CD4-positive, alpha-beta T cell (primary cell): ENCODE measurements at regions of chr22 and their contacts with region 1.

Region 1: DNA sequence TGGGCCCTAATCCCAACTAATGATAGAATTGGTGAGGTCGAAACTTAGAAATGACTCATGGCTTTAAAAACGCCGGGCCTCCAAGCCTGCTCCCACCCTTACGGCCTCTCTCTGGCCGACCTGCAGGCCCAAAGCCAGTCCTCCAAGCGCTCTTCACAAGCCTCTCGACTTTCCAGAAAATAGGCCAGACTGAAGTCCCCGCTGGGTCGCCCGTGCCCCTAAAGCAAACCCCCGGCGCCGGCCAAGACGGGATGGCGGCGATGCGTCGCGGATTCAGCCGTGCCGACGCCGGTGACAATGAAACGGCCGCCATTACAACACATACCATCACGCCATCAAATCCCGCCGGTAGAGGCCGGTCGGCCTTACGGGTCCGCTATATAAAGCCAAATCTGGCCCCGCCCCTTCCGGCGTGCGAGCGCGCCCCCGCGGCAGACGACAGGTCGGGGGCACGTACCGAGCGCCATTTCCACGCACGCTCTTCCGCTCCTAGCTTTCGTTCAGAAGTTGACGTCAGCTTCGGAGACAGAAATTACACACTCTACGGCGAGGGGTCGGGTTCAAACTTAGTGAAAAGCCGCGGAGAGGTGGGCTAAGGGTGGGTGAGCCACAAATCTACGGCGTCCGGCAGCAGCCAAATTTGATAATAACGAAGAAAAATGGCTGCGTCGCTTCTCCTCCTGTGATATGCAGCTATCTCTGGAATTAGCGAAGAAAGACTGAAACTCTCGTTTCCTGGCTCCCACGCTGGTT is at the start of gene RPL3:
- DNase-seq: peak; percentile 96 to 99 (median 98)
- ATAC-seq: peak; percentile 76
- H3K4me3 ChIP-seq: peak within 1 kb of the TSS; percentile 90
- H3K4me3 Mint-ChIP-seq: peak within 1 kb of the TSS; percentile 99
- H3K27ac ChIP-seq: peak within 1 kb of the TSS; percentile 88 to 92
- H3K27ac Mint-ChIP-seq: peak within 1 kb of the TSS; percentile 96
- H3K4me1 ChIP-seq: peaks cover 57% of the 10 kb centered on the region
- H3K4me1 Mint-ChIP-seq: peaks cover 41% of the 10 kb centered on the region
- H3K27me3 ChIP-seq: no peaks in the 10 kb centered on the region
- H3K27me3 Mint-ChIP-seq: no peaks in the 10 kb centered on the region
- CTCF ChIP-seq: no peak
- total RNA-seq, gene RPL3: 3,952 to 3,974 TPM

Region 2: DNA sequence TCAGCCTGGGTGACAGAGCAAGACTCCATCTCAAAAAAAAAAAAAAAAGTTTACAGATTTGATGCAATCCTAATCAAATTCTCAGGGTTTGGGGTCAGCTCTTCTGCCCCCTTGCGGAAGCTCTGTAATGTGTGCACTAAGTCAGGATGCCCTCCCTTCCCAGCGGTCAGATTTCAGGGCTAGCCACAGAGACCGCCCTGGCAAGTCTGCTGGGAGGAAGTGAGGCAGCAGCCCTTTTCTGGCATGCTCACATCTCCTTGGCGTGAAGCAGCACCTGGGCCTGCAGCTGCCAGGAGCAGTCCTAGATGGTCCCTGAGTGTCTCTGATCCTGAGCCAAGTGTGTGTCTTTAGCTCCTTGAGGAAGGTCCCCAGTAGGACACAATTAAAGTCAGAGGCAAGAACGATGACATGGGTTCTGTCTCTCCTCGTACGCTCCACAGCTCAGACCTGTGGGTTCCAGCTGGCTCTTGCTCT is 316.2 kb before region 1 on chr22:
- CTCF ChIA-PET with region 1: interaction called, 4 read pairs
- POLR2A ChIA-PET with region 1: interaction called, 4 read pairs
- intact Hi-C with region 1: loop called in 1 of 2 experiments (anchors 5 kb)
- DNase-seq: peak; percentile 51 to 91 (median 64)
- ATAC-seq: peak; percentile 83
- H3K4me3 ChIP-seq: no peak overlapping the region
- H3K4me3 Mint-ChIP-seq: no peak overlapping the region
- H3K27ac ChIP-seq: no peak overlapping the region
- H3K27ac Mint-ChIP-seq: no peak overlapping the region
- H3K4me1 ChIP-seq: peaks cover 16% of the 10 kb centered on the region
- H3K4me1 Mint-ChIP-seq: peaks cover 9% of the 10 kb centered on the region
- H3K27me3 ChIP-seq: no peaks in the 10 kb centered on the region
- H3K27me3 Mint-ChIP-seq: no peaks in the 10 kb centered on the region
- CTCF ChIP-seq: peak; percentile 80

Region 3: DNA sequence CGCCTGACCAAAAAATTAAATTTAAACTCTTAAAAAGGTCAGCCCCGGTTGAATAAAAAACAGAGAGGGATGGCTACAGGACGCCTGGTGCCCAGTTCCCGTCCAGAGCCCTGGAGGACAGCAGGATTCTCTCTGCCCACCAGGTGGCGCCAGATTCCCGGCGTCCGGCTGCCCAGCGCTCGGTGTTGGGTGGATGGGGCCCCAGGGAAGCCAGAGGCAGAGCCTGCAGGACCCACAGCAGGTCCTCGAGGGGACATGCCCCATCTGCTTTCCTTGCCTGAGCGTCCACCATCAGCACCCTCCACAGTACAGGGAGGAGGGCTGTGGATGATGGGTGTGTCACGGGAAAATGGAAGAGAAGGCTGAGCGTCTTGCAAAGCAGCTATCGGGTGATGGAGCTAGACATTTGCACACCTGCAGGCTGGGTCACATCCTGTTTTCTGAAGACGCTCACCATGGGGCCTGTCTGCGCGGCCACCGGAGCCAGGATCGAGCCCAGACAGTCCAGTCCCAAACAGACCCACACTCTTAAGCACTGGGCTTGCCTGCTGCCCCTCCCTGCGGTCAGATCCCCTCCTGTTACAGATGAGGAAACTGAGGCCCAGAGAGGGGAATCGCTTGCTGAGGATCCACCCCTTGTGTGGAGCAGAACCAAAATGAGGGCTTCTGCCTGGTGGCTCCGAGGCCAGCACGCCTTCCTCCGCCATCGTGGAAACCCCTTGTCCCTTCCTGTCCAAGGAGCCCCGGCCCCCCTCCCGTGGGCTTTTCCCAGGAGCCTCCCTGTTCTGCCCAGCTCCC is 148.4 kb before region 1 on chr22:
- CTCF ChIA-PET with region 1: interaction called, 43 read pairs
- POLR2A ChIA-PET with region 1: interaction called, 163 read pairs
- intact Hi-C with region 1: loop called in 1 of 2 experiments (anchors 1 kb)
- DNase-seq: peak; percentile 63 to 90 (median 84)
- ATAC-seq: peak; percentile 74
- H3K4me3 ChIP-seq: peak overlapping the region; percentile 41
- H3K4me3 Mint-ChIP-seq: peak overlapping the region; percentile 69
- H3K27ac ChIP-seq: peak overlapping the region in 1 of 2 donors; percentile 58
- H3K27ac Mint-ChIP-seq: peak overlapping the region; percentile 97
- H3K4me1 ChIP-seq: peaks cover 58% of the 10 kb centered on the region
- H3K4me1 Mint-ChIP-seq: peaks cover 47% of the 10 kb centered on the region
- H3K27me3 ChIP-seq: no peaks in the 10 kb centered on the region
- H3K27me3 Mint-ChIP-seq: no peaks in the 10 kb centered on the region
- CTCF ChIP-seq: peak; percentile 99

Region 4: DNA sequence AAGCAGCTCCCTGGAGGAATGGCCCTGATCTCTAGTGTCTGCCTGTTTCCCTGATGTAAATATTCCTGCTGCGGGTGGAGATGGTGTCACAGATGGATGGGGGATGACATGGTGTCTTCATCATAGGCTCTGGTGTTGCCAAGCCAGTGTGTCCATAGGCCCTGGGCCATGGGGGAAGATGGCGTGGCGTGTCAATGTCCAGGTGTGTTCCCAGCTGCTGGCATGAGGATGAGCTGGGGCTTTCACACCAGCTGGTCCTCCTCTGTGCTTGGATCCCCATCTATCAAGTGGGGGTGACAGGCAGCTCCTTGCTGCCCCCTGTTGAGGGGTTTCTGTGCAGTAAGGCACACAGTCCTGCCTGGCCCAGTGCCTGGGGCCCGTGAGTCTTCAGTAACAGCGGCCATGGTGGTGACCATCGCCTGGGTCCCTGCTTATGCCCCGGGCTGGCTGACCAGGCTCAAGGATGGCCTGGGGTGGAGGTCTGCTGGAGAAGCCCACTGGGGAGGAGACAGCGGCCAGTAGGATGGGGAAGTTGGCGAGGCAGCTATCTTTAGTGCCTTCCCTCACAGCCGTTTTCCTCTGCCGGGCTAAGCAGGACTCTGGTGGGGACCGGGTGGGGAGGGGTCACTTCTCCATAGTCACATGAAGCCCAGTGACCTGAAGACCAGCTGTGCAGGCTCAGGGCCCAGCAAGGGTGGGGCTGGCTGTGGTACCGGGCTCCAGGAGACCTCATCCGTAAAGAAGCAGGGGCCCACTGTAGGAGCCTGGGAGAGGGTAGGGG is 12.7 kb before region 1 on chr22:
- CTCF ChIA-PET with region 1: interaction called, 11 read pairs
- POLR2A ChIA-PET with region 1: interaction called, 21 read pairs
- intact Hi-C with region 1: no loop called
- DNase-seq: peak in 13 of 14 experiments; percentile 29 to 77 (median 58)
- ATAC-seq: peak; percentile 50
- H3K4me3 ChIP-seq: no peak overlapping the region
- H3K4me3 Mint-ChIP-seq: no peak overlapping the region
- H3K27ac ChIP-seq: no peak overlapping the region
- H3K27ac Mint-ChIP-seq: no peak overlapping the region
- H3K4me1 ChIP-seq: peaks cover 27% of the 10 kb centered on the region
- H3K4me1 Mint-ChIP-seq: peaks cover 9% of the 10 kb centered on the region
- H3K27me3 ChIP-seq: no peaks in the 10 kb centered on the region
- H3K27me3 Mint-ChIP-seq: peaks cover 4% of the 10 kb centered on the region
- CTCF ChIP-seq: peak; percentile 56

Region 5: DNA sequence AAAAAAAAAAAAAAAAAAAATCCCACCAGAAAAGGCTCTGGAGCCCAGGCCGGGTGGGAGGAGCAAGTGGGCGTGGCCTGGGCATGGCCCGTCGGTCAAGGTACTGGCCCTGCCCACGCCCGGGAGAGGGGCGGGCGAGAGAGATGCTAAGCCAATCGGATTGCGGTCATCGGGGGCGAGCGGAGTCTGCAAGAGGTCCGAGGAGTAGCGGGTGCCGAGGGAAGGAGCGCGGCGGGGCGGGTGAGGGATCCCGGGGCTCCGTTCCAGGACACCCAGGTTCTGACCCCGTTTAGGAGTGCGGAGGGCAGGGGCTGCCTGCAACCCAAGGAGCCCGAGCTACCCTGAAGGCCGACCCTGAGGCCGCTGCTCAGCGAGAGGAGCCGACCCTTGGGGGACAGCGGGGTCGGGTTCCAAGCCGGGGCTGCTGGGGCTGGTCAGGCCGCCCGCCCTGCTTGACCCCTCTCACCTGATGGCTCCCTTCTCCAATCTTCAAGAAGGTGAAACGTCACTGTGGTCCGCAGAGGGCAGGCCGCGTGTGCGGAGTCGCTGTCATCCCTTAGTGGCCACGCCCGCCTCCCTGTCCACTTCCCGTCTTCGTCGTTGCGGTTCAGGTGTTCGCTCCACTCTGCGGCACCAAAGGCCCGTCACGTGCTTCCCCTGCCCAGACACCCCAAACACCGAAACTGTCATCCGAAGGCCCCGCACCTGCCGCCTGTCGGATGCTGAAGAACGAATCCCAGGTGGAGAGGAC is 69.0 kb after region 1 on chr22:
- CTCF ChIA-PET with region 1: no interaction called
- POLR2A ChIA-PET with region 1: interaction called, 3 read pairs
- intact Hi-C with region 1: loop called in 1 of 2 experiments (anchors 5 kb)
- DNase-seq: peak; percentile 69 to 95 (median 79)
- ATAC-seq: peak; percentile 93
- H3K4me3 ChIP-seq: peak overlapping the region; percentile 92
- H3K4me3 Mint-ChIP-seq: peak overlapping the region; percentile 95
- H3K27ac ChIP-seq: peak overlapping the region; percentile 81 to 88
- H3K27ac Mint-ChIP-seq: peak overlapping the region; percentile 99
- H3K4me1 ChIP-seq: peaks cover 28% of the 10 kb centered on the region
- H3K4me1 Mint-ChIP-seq: peaks cover 21% of the 10 kb centered on the region
- H3K27me3 ChIP-seq: no peaks in the 10 kb centered on the region
- H3K27me3 Mint-ChIP-seq: no peaks in the 10 kb centered on the region
- CTCF ChIP-seq: no peak

Region 6: GRCh38 chr22:39414886-39415285 is 95.4 kb after region 1 on chr22:
- CTCF ChIA-PET with region 1: no interaction called
- POLR2A ChIA-PET with region 1: interaction called, 14 read pairs
- intact Hi-C with region 1: no loop called
- DNase-seq: no peak
- ATAC-seq: no peak
- H3K4me3 ChIP-seq: no peak overlapping the region
- H3K4me3 Mint-ChIP-seq: peak overlapping the region; percentile 69
- H3K27ac ChIP-seq: no peak overlapping the region
- H3K27ac Mint-ChIP-seq: peak overlapping the region; percentile 87
- H3K4me1 ChIP-seq: peaks cover 53% of the 10 kb centered on the region
- H3K4me1 Mint-ChIP-seq: peaks cover 62% of the 10 kb centered on the region
- H3K27me3 ChIP-seq: no peaks in the 10 kb centered on the region
- H3K27me3 Mint-ChIP-seq: no peaks in the 10 kb centered on the region
- CTCF ChIP-seq: no peak